A549 (cell line): ENCODE measurements at regions of chr1 and their contacts with region 1.

Region 1: DNA sequence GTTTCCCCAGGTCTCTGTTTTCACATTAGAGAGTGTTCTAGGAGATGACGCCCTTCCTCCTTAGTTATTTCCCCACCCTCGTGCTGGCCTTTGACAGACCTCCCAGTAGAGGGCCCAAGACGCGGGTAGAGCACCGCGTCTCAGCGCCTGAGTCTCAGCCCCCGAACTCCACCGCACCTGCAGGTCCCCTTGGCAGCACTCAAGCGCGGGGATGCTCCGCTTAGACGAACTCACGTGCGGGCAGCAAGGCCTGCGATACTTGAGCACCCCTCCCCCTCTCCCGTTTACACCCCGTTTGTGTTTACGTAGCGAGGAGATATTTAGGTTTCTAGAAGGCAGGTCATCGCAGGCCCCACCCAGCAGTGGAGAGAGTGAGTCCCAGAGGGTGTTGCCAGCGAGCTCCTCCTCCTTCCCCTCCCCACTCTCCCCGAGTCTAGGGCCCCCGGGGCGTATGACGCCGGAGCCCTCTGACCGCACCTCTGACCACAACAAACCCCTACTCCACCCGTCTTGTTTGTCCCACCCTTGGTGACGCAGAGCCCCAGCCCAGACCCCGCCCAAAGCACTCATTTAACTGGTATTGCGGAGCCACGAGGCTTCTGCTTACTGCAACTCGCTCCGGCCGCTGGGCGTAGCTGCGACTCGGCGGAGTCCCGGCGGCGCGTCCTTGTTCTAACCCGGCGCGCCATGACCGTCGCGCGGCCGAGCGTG is at the start of gene CD55:
- DNase-seq: peak; percentile 92 to 99
- ATAC-seq: peak; percentile 96 to 97
- H3K4me3 ChIP-seq: peak within 1 kb of the TSS; percentile 56
- H3K27ac ChIP-seq: peak within 1 kb of the TSS; percentile 84 to 96
- H3K4me1 ChIP-seq: peaks cover 29% of the 10 kb centered on the region
- CTCF ChIP-seq: peak; percentile 37; the same call in 2 of the 3 replicates
- EP300 ChIP-seq: no peak; a peak in 2 of 5 replicates
- POLR2A ChIP-seq: peak; percentile 65
- RAD21 ChIP-seq: peak; percentile 30 to 41; a peak in 4 of 5 replicates
- polyA plus RNA-seq, gene CD55: 173 and 180 TPM in 2 replicates

Region 2: DNA sequence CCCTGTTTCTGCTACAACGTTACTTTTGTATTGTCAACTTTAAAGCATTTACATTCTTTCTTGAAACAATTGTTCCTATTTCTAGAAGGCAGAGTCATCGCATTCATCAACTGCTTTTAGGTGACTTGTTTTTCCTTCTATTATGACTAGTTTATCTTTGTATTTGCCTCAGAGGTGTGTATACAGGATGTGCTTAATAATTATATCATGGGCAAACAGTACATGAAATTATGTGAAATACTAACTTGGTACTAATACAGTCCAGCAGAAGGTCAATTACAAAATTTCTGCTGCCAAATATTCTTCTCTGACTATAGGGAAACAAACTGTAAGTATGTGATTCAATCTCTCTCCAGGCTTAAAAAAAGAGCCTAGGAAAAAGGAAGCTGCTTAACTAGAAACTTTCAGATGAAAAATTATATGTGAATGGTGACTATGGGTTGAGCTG is 115.6 kb before region 1 on chr1:
- CTCF ChIA-PET with region 1: no interaction called
- POLR2A ChIA-PET with region 1: interaction called, 10 read pairs
- DNase-seq: peak in 1 of 2 experiments; percentile 6
- ATAC-seq: peak; percentile 52 to 57
- H3K4me3 ChIP-seq: no peak overlapping the region
- H3K27ac ChIP-seq: peak overlapping the region; percentile 62 to 80
- H3K4me1 ChIP-seq: peaks cover 18% of the 10 kb centered on the region; the same call in 2 of the 3 replicates
- CTCF ChIP-seq: no peak
- EP300 ChIP-seq: no peak
- POLR2A ChIP-seq: no peak
- RAD21 ChIP-seq: no peak

Region 3: DNA sequence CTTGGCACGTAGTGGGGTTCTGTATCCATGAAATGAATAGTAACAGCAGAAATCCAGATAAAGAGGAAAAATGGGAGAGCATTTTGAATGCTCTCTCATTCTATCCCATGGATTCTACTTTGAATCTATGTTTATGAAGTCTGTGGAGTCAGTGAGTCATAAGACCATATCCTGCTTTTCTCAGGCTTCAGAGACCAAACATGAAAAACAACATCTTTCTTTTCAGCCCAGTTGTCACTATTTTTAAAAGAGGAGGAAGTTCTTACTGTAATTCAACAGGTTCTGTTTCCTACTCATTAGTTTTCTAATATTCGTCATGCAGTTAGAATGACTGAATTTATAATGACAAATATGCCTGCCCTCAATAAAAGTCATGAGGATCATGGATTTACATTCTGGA is 39.2 kb before region 1 on chr1:
- CTCF ChIA-PET with region 1: no interaction called
- POLR2A ChIA-PET with region 1: no interaction called
- DNase-seq: no peak
- ATAC-seq: no peak
- H3K4me3 ChIP-seq: no peak overlapping the region
- H3K27ac ChIP-seq: no peak overlapping the region
- H3K4me1 ChIP-seq: no peaks in the 10 kb centered on the region
- CTCF ChIP-seq: no peak
- EP300 ChIP-seq: no peak
- POLR2A ChIP-seq: no peak
- RAD21 ChIP-seq: no peak

Region 4: DNA sequence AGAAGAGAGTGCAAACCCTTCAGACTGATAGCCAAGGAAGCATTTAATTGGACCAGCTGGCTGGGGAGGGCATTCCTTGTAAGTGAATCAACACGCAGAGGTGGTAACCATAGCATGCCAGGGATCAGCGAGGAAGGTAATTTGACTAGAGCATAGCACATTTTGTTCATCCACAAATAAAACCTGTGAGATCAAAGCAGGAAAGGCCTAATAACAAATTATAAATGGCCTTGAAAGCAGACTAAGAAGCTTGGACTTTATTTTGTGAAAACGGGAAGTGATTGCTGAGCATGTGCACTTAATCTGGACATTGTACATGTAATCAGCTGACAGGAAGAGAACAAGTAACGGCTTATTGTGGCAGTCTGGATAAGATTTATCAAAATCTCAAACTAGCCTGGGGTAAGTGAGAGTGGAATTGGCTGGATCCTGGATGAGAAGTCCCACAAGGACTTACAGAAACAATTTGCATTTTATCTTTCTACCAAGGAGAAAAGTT is 11.4 kb before region 1 on chr1:
- CTCF ChIA-PET with region 1: interaction called, 5 read pairs
- POLR2A ChIA-PET with region 1: interaction called, 11 read pairs
- DNase-seq: peak; percentile 74 to 78
- ATAC-seq: peak; percentile 98 to 99
- H3K4me3 ChIP-seq: peak overlapping the region; percentile 29
- H3K27ac ChIP-seq: peak overlapping the region; percentile 75 to 77
- H3K4me1 ChIP-seq: peaks cover 41% of the 10 kb centered on the region
- CTCF ChIP-seq: no peak
- EP300 ChIP-seq: no peak
- POLR2A ChIP-seq: no peak
- RAD21 ChIP-seq: no peak

Region 5: DNA sequence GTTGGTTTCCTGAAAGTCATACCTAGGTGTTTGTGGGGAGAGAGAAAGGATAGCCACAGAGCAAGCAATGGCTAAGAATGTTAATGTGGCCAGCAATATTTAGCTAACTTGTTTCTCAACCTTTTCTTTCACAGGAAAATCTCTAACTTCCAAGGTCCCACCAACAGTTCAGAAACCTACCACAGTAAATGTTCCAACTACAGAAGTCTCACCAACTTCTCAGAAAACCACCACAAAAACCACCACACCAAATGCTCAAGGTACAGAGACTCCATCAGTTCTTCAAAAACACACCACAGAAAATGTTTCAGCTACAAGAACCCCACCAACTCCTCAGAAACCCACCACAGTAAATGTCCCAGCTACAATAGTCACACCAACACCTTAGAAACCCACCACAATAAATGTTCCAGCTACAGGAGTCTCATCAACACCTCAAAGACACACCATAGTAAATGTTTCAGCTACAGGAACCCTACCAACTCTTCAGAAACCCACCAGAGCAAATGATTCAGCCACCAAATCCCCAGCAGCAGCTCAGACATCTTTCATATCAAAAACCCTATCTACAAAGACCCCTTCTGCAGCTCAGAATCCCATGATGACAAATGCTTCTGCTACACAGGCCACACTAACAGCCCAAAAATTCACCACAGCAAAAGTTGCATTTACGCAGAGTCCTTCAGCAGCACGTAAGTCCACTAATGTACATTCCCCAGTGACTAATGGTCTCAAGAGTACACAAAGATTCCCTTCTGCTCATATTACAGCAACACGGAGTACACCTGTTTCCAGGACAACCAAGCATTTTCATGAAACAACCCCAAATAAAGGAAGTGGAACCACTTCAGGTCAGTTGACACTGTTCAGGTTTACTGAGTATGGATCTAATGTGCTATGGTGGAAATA is 15.6 kb after region 1 on chr1:
- CTCF ChIA-PET with region 1: interaction called, 3 read pairs
- POLR2A ChIA-PET with region 1: interaction called, 16 read pairs
- DNase-seq: peak; percentile 11 to 77
- ATAC-seq: peak; percentile 75 to 78
- H3K4me3 ChIP-seq: no peak overlapping the region
- H3K27ac ChIP-seq: peak overlapping the region in 1 of 2 experiments; percentile 2; a peak in 2 of 6 replicates
- H3K4me1 ChIP-seq: no peaks in the 10 kb centered on the region; the same call in 1 of the 3 replicates
- CTCF ChIP-seq: no peak
- EP300 ChIP-seq: no peak
- POLR2A ChIP-seq: no peak
- RAD21 ChIP-seq: no peak

Region 6: DNA sequence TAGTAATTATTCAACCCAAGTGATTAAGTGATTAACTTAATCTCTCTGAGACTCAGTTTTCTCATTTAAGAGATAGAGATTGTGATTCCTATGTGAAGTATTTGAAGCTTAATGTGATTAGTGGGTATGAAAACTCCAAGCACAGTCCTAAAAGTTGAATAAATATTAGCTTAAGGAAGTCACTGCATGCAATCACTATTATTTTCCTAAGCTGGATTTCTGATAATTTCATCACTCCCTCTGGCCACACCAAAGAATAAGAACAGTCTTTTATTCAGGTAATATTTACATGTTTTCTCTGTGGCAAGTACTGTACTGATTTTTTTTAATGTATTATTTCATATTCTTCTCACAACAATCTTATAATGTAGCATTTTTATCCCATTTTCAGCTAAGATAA is 31.3 kb after region 1 on chr1:
- CTCF ChIA-PET with region 1: interaction called, 3 read pairs
- POLR2A ChIA-PET with region 1: interaction called, 16 read pairs
- DNase-seq: no peak
- ATAC-seq: no peak
- H3K4me3 ChIP-seq: no peak overlapping the region
- H3K27ac ChIP-seq: peak overlapping the region in 1 of 2 experiments; percentile 58; a peak in 3 of 6 replicates
- H3K4me1 ChIP-seq: peaks cover 15% of the 10 kb centered on the region; the same call in 2 of the 3 replicates
- CTCF ChIP-seq: no peak
- EP300 ChIP-seq: no peak
- POLR2A ChIP-seq: no peak
- RAD21 ChIP-seq: no peak

Region 7: DNA sequence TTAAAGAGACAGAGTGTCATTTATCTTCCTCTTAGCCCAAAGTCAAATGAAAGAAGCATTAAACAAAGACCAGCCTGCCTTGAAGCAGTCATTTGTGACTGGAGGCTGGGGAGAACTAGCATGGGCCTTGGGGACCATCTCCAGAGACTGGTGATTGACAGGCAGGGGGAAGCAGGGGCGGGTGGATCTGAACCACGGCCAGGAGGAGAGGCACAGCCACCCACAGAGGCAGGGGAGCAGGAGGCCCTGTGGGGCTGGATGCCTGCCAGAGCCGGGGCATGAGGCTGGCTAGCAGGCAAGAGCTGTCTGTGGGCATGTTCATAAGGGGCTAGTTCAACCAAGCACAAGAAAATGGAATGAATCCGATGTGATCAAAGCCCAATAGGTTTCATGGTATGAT is 849.0 kb after region 1 on chr1:
- CTCF ChIA-PET with region 1: no interaction called
- POLR2A ChIA-PET with region 1: no interaction called
- DNase-seq: no peak
- ATAC-seq: no peak
- H3K4me3 ChIP-seq: no peak overlapping the region
- H3K27ac ChIP-seq: no peak overlapping the region
- H3K4me1 ChIP-seq: peaks cover 9% of the 10 kb centered on the region
- CTCF ChIP-seq: no peak
- EP300 ChIP-seq: no peak
- POLR2A ChIP-seq: no peak
- RAD21 ChIP-seq: no peak